Dendritic cell treated with granulocyte-macrophage colony-stimulating factor and Interleukin-4, amounts not matched to agents 40 ng/mL and 50 ng/mL, for 4 days (primary cell): ENCODE measurements at regions of chrX and their contacts with region 1.

Region 1: DNA sequence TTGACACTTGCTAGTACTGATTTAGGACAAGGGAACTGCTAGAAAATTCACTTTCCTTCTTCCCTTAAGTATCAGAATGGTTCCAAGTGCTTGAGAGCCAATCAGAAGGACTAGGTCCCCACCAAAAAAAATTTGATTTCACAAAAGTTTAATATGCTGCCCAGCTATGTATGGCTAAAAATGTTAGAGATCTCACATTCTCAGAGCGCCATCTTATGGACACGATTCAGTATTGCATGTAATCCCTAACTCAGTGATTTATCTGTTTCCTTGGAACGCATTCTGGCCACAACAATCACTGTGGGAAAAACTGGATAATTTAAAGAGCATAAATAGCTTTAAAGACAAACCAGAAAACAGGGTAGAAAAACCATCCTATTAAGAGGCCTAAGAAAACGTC is 255.1 kb upstream of the GPC4 start:
- H3K4me3 Mint-ChIP-seq: no peak overlapping the region
- H3K27ac Mint-ChIP-seq: no peak overlapping the region
- H3K4me1 Mint-ChIP-seq: no peaks in the 10 kb centered on the region
- H3K27me3 Mint-ChIP-seq: no peaks in the 10 kb centered on the region

Region 2: GRCh38 chrX:132984058-132984650 is 686.2 kb before region 1 on chrX:
- intact Hi-C with region 1: loop called (anchors 5 kb)
- H3K4me3 Mint-ChIP-seq: no peak overlapping the region
- H3K27ac Mint-ChIP-seq: no peak overlapping the region
- H3K4me1 Mint-ChIP-seq: no peaks in the 10 kb centered on the region
- H3K27me3 Mint-ChIP-seq: peaks cover 3% of the 10 kb centered on the region

Region 3: DNA sequence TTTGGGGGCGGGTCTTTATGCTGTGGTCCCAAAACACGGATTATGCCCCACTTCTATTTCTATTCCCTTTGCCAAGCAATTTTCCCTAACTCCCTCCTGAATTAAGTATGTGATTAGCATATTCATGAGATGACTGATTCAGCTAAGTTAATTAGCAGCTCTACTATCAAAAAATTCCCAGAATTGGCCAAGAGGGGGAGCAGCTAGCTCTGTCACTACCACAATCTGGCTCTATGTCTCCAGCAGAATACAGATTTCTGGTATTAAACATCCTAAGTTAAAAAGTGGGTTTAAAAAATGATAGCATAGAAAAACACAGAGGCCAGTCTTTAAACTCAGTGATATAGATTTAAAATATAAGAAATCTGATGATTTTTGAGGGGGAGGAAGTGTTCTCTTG is 335.4 kb before region 1 on chrX:
- intact Hi-C with region 1: loop called (anchors 1 kb)
- H3K4me3 Mint-ChIP-seq: no peak overlapping the region
- H3K27ac Mint-ChIP-seq: no peak overlapping the region
- H3K4me1 Mint-ChIP-seq: no peaks in the 10 kb centered on the region
- H3K27me3 Mint-ChIP-seq: no peaks in the 10 kb centered on the region

Region 4: DNA sequence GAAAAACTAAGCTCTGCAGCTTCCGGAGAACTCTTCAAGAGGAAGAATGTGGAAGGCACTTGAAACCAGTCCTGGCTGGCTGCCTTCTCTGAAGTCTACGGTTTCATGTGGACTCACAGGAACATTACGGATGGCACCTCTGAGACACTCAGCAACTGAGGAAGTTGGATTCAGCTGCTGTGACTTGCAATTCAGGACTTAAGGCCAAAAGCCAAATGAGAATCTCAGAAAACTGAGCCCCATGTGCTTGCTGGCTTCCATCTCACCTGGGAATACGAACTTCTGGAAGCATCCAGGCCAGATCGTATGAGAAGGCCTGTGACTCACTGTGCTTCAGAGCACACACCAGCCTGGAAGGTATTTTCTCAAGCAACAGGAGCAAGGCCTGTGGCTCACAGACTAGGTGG is 147.3 kb before region 1 on chrX:
- intact Hi-C with region 1: no loop called
- H3K4me3 Mint-ChIP-seq: no peak overlapping the region
- H3K27ac Mint-ChIP-seq: no peak overlapping the region
- H3K4me1 Mint-ChIP-seq: peaks cover 7% of the 10 kb centered on the region
- H3K27me3 Mint-ChIP-seq: no peaks in the 10 kb centered on the region